Activated CD4-positive, alpha-beta memory T cell treated with anti-CD3 and anti-CD28 coated beads for 36 hours (primary cell): ENCODE measurements at regions of chr3 and their contacts with region 1.

Region 1: DNA sequence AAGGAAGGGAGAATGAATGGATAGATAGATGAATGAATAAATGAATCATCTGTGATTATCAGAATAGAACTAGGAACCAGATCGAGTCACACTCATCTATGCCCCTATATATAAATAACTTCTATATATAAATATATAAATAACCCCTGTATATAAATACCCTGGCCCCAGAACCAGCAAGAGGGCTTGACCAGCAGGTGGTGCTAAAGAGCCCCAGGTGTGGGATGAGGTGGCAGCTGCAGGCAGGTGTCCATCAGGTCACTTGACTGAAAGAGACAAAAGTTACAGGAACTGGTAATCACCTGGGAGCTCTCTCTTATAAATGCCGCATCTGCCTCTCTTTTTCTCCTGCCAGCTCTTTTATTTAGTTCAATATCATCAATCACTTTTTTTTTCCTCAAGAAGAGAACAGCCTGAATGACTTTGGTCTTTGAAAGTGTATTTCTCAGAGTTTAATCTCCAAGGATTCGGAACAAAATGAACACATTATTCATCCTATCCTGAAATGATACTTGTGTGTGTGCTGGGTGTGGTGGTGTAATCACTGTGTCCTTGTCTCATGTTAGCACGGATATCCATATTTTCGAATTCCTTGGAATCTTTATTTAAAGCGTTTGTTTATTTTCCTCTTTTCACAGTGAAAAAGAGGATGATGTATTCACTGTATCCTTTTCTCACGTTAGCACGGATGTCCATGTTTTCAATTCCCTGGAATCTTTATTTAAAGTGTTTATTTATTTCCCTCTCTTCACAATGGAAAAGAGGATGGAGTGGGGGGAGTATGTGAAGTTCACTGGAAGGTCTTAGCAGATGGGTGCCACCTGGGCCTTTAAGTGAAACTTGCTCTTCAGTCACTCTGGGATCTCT is 35.4 kb upstream of the ATG7 start:
- DNase-seq: peak; percentile 86
- H3K4me3 Mint-ChIP-seq: no peak overlapping the region
- H3K27ac Mint-ChIP-seq: no peak overlapping the region
- H3K4me1 Mint-ChIP-seq: peaks cover 39% of the 10 kb centered on the region
- H3K27me3 Mint-ChIP-seq: peaks cover 12% of the 10 kb centered on the region

Region 2: DNA sequence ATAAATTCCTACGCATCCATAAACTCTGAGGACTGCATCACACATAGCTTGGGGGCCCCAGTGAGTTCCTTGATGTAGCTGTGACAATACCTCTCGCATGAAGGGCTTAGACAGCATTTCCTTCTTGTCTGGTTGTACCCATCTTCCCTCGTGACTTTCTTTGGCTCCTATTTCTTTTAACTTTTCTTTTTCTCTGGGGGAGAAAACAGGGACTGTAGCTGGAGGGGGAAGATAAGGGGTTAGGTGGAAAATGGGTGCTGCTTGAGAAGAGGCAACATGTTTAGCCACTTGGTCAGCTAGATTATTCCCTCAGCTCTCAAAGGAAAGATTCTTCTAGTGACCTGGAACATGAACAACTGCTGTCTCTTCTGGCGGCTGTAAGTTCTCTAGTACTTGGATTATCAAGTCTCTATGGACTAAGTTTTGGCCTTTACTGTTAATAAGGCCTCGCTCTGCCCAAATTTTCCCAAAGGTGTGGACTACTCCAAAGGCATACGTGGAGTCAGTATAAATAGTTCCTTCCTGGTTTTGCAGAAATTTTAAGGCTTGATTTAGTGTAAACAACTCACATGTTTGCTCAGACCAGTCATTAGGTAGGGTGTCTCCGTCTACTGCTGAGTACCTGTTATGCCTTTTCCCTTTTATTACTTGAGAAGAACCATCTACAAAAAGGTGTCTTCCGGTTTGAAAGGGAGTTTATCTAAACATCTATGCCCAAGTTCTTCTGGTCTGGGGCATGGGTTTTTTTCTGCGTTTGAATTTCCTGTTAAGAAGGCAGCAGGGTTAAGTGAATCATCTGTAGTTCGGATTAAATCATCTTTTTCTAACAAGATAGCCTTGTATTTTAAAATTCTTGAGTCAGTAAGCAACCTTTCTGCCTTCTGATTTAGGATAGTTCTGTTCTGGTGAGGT is 14.3 kb after region 1 on chr3:
- CTCF ChIA-PET with region 1: interaction called, 3 read pairs
- POLR2A ChIA-PET with region 1: interaction called, 3 read pairs
- intact Hi-C with region 1: loop called (anchors 1 kb)
- DNase-seq: peak; percentile 19
- H3K4me3 Mint-ChIP-seq: peak overlapping the region; percentile 66
- H3K27ac Mint-ChIP-seq: peak overlapping the region; percentile 87
- H3K4me1 Mint-ChIP-seq: peaks cover 19% of the 10 kb centered on the region
- H3K27me3 Mint-ChIP-seq: peaks cover 1% of the 10 kb centered on the region

Region 3: GRCh38 chr3:11288786-11289682 is 52.2 kb after region 1 on chr3:
- CTCF ChIA-PET with region 1: interaction called, 24 read pairs
- POLR2A ChIA-PET with region 1: interaction called, 23 read pairs
- intact Hi-C with region 1: loop called (anchors 1 kb)
- DNase-seq: no peak
- H3K4me3 Mint-ChIP-seq: peak overlapping the region; percentile 18
- H3K27ac Mint-ChIP-seq: peak overlapping the region; percentile 84
- H3K4me1 Mint-ChIP-seq: peaks cover 47% of the 10 kb centered on the region
- H3K27me3 Mint-ChIP-seq: no peaks in the 10 kb centered on the region

Region 4: GRCh38 chr3:11335056-11335608 is 98.3 kb after region 1 on chr3:
- CTCF ChIA-PET with region 1: interaction called, 101 read pairs
- POLR2A ChIA-PET with region 1: interaction called, 3 read pairs
- intact Hi-C with region 1: loop called (anchors 1 kb)
- DNase-seq: no peak
- H3K4me3 Mint-ChIP-seq: no peak overlapping the region
- H3K27ac Mint-ChIP-seq: no peak overlapping the region
- H3K4me1 Mint-ChIP-seq: peaks cover 11% of the 10 kb centered on the region
- H3K27me3 Mint-ChIP-seq: no peaks in the 10 kb centered on the region

Region 5: DNA sequence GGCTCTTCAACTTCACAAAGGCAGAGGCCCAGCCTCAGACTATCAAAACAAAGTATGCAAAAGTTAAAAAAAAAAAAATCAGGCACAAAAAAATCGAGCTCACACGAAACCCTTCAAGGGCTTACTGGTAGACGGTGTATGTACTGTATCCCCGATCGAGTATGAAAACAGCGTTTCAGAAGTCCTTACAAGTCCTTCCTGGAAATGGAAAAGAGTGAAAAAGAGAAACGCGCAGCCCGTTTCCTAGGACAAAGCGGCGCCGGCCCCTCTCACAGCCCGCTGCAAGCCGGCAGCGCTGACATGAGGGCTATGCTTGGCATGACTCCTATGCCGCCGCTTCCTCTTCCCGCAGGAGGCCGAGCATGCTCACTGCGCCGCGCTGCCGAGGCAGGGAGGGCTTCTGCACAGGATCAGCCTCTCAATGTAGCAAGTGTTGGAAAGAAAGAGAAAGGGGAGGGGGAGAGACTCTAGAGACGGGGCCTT is 406.8 kb after region 1 on chr3 and contains the start of gene VGLL4:
- CTCF ChIA-PET with region 1: no interaction called
- POLR2A ChIA-PET with region 1: interaction called, 8 read pairs
- intact Hi-C with region 1: loop called (anchors 2 kb)
- DNase-seq: peak; percentile 81
- H3K4me3 Mint-ChIP-seq: peak within 1 kb of the TSS; percentile 96
- H3K27ac Mint-ChIP-seq: peak within 1 kb of the TSS; percentile 97
- H3K4me1 Mint-ChIP-seq: peaks cover 27% of the 10 kb centered on the region
- H3K27me3 Mint-ChIP-seq: no peaks in the 10 kb centered on the region
- total RNA-seq, gene VGLL4: 18.2 to 18.7 TPM